IMR-90 (cell line): ENCODE measurements at regions of chr1 and their contacts with region 1.

Region 1: DNA sequence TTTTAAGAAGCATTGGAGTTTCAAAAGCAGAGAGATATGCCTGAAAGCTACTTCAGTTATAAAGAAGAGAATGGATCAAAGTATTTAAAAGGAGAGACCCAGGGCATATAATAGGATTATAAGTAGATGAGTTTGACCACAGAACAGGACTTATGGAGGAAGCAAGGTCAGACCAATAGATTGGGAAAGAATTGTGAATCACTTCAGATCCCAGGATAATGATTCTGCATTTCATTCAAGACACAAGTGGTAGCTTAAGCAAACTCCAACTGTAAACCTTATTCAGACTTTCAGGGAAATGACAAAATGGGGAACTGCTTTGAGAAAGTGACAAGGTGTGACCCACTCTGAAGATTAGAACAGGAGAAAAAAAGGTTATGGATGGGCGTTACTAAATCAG is 18.9 kb upstream of the OR10J5 start:
- DNase-seq: no peak
- ATAC-seq: no peak
- H3K4me3 ChIP-seq: no peak overlapping the region
- H3K27ac ChIP-seq: no peak overlapping the region
- H3K4me1 ChIP-seq: no peaks in the 10 kb centered on the region
- H3K27me3 ChIP-seq: no peaks in the 10 kb centered on the region
- CTCF ChIP-seq: no peak
- POLR2A ChIP-seq: no peak
- RAD21 ChIP-seq: no peak

Region 2: DNA sequence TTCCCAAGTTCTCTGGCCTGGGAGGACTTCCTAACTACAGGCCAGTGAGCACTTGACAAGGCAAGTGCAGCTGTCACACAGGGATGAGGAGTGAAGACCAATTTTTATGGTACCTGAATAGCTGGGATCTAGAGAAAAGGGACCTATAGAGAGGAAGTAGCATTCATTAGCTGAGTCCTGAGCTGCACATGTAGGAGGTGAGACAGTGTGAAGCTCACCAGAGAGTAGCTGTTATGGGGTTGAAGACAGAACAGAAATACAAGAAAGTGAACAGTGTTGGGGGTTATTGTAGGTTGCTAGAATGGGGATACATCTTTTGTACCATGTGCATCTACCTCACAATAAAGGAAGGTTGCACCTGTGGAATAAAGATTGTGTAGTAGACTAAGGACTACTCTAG is 661.0 kb before region 1 on chr1:
- CTCF ChIA-PET with region 1: no interaction called
- POLR2A ChIA-PET with region 1: no interaction called
- dilution Hi-C with region 1: no loop called
- in situ Hi-C with region 1: no loop called
- intact Hi-C with region 1: no loop called
- DNase-seq: no peak
- ATAC-seq: no peak
- H3K4me3 ChIP-seq: no peak overlapping the region
- H3K27ac ChIP-seq: no peak overlapping the region
- H3K4me1 ChIP-seq: no peaks in the 10 kb centered on the region
- H3K27me3 ChIP-seq: no peaks in the 10 kb centered on the region
- CTCF ChIP-seq: no peak
- POLR2A ChIP-seq: no peak
- RAD21 ChIP-seq: no peak

Region 3: GRCh38 chr1:160022330-160023310 is 467.9 kb after region 1 on chr1:
- CTCF ChIA-PET with region 1: no interaction called
- POLR2A ChIA-PET with region 1: no interaction called
- dilution Hi-C with region 1: no loop called
- in situ Hi-C with region 1: no loop called
- intact Hi-C with region 1: no loop called
- DNase-seq: no peak
- ATAC-seq: no peak
- H3K4me3 ChIP-seq: no peak overlapping the region
- H3K27ac ChIP-seq: no peak overlapping the region
- H3K4me1 ChIP-seq: peaks cover 6% of the 10 kb centered on the region
- H3K27me3 ChIP-seq: peaks cover 13% of the 10 kb centered on the region
- CTCF ChIP-seq: no peak
- POLR2A ChIP-seq: no peak
- RAD21 ChIP-seq: no peak

Region 4: GRCh38 chr1:161215076-161215475 is 1660.4 kb after region 1 on chr1 and contains the start of gene FCER1G:
- CTCF ChIA-PET with region 1: no interaction called
- POLR2A ChIA-PET with region 1: interaction called, 10 read pairs
- dilution Hi-C with region 1: no loop called
- in situ Hi-C with region 1: no loop called
- intact Hi-C with region 1: no loop called
- DNase-seq: no peak
- ATAC-seq: no peak
- H3K4me3 ChIP-seq: no peak within 1 kb of the TSS
- H3K27ac ChIP-seq: no peak within 1 kb of the TSS
- H3K4me1 ChIP-seq: peaks cover 11% of the 10 kb centered on the region
- H3K27me3 ChIP-seq: no peaks in the 10 kb centered on the region
- CTCF ChIP-seq: no peak
- POLR2A ChIP-seq: no peak
- RAD21 ChIP-seq: no peak
- total RNA-seq, gene FCER1G: not detected in 2 replicates